ENCODE measurements at regions of chr1 and their contacts with region 1.

Region 1: GRCh38 chr1:23422241-23423030 is 2.1 kb downstream of the TCEA3 start:
- DNase-seq: peak; percentile 74 to 84 (median 82)
- ATAC-seq: peak; percentile 53 to 70 (median 56)
- H3K4me3 ChIP-seq: peak overlapping the region in 8 of 12 donors; percentile 5 to 80 (median 22)
- H3K27ac ChIP-seq: peak overlapping the region in 11 of 12 donors; percentile 71 to 95 (median 85)
- H3K4me1 ChIP-seq: peaks cover 0 to 59% (median 36%) of the 10 kb centered on the region in 12 donors
- H3K27me3 ChIP-seq: peaks cover 0 to 16% (median 0%) of the 10 kb centered on the region in 9 donors
- CTCF ChIP-seq: no peak
- POLR2A ChIP-seq: no peak

Region 2: DNA sequence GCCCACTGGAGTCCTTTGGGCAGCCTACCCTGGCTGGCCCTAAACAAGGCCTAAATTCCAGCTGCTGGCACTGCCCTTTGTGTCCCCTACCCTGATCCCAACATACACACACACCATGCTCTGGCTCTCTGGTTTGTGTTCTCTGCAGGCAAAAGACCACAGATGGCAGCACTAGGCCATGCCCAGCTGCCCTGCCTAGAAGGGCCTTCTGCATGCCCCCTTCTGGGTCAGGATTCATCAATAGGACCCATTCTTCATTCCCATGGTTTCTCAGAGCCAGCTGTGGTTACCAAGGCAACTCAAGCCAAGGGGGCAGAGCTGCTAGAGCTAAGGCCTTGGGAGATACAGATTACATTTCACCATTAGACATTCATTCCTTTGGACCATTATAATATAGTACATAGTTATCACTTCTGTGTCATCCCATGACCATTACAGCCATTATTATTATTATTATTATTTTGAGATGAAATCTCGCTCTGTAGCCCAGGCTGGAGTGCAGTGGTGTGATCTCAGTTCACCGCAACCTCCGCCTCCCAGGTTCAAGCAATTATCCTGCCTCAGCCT is 44.1 kb after region 1 on chr1:
- intact Hi-C with region 1: loop called in 1 of 10 experiments (anchors 5 kb)
- DNase-seq: no peak
- ATAC-seq: no peak
- H3K4me3 ChIP-seq: no peak overlapping the region
- H3K27ac ChIP-seq: no peak overlapping the region
- H3K4me1 ChIP-seq: peaks cover 5 to 33% (median 26%) of the 10 kb centered on the region in 12 donors
- H3K27me3 ChIP-seq: no peaks in the 10 kb centered on the region
- CTCF ChIP-seq: no peak
- POLR2A ChIP-seq: no peak

Region 3: GRCh38 chr1:23484253-23485001 is 62.0 kb after region 1 on chr1:
- intact Hi-C with region 1: loop called in 4 of 10 experiments (anchors 2 to 5 kb)
- DNase-seq: peak; percentile 94 to 97 (median 96)
- ATAC-seq: peak; percentile 87 to 94 (median 92)
- H3K4me3 ChIP-seq: peak overlapping the region; percentile 81 to 100 (median 94)
- H3K27ac ChIP-seq: peak overlapping the region; percentile 71 to 98 (median 93)
- H3K4me1 ChIP-seq: peaks cover 0 to 45% (median 26%) of the 10 kb centered on the region in 12 donors
- H3K27me3 ChIP-seq: peaks cover 0 to 18% (median 0%) of the 10 kb centered on the region in 9 donors
- CTCF ChIP-seq: no peak
- POLR2A ChIP-seq: peak in 1 of 2 donors; percentile 36

Region 4: DNA sequence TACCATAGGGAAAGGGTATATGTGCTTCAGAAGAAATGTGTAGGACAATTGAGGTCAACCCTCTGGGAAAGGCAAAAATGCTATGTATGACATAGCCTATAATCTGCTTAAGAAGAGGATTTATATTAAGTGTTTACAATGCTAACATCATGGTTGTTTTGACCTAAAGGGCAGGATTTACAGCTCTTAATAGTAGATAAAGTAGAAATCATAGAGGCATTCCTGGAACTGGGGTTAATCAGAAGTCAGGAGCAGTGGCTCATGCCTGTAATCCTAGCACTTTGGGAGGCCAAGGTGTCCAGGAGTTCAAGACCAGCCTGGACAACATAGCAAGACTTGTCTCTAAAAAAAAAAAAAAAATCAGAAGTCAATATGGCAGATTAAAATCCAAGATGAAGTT is 260.5 kb after region 1 on chr1:
- intact Hi-C with region 1: no loop called
- DNase-seq: no peak
- ATAC-seq: no peak
- H3K4me3 ChIP-seq: no peak overlapping the region
- H3K27ac ChIP-seq: no peak overlapping the region
- H3K4me1 ChIP-seq: no peaks in the 10 kb centered on the region
- H3K27me3 ChIP-seq: peaks cover 0 to 28% (median 0%) of the 10 kb centered on the region in 9 donors
- CTCF ChIP-seq: no peak
- POLR2A ChIP-seq: no peak

Region 5: DNA sequence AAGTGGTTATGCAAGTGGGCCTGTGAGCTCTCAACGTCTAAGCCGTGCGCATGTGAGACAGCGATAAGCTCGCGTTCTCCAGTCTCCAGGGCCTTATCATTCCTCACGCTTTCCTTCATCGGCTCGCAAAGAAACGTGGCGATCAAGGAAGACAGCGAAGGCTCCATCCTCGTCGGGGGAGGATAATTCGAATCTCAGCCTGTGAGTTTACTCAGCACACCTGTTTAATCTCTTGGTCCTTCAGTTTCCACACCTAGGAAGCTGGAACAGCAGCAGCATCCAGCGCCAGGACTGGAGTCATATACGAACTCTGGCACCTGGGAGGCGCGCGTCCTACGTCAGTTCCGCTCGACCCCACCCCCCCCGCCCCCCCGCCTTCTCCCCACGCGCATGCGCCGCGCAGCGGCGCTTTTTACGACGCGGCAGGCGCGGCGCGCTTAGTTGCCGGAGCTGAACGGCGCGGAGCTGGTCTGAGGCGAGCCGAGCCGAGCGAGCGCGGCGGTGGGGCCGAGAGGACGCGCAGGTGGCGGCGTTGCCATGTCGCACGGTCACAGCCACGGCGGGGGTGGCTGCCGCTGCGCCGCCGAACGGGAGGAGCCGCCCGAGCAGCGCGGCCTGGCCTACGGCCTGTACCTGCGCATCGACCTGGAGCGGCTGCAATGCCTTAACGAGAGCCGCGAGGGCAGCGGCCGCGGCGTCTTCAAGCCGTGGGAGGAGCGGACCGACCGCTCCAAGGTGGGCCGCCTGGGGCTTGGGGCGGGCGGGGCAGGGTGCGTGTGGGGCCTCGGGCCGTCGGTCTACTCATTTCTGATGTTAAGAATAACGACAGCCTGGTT is 355.8 kb after region 1 on chr1 and contains the start of gene PITHD1:
- intact Hi-C with region 1: no loop called
- DNase-seq: peak; percentile 78 to 90 (median 82)
- ATAC-seq: peak; percentile 87 to 94 (median 90)
- H3K4me3 ChIP-seq: peak within 1 kb of the TSS; percentile 66 to 100 (median 93)
- H3K27ac ChIP-seq: peak within 1 kb of the TSS; percentile 7 to 97 (median 89)
- H3K4me1 ChIP-seq: peaks cover 4 to 44% (median 30%) of the 10 kb centered on the region in 12 donors
- H3K27me3 ChIP-seq: no peaks in the 10 kb centered on the region
- CTCF ChIP-seq: no peak
- POLR2A ChIP-seq: peak; percentile 83 to 89
- total RNA-seq, gene PITHD1: 34.8 to 59.2 (median 46.2) TPM

Measured in heart left ventricle (tissue), 16 donors.